ENCODE measurements at regions of chr9 and their contacts with region 1.

Region 1: DNA sequence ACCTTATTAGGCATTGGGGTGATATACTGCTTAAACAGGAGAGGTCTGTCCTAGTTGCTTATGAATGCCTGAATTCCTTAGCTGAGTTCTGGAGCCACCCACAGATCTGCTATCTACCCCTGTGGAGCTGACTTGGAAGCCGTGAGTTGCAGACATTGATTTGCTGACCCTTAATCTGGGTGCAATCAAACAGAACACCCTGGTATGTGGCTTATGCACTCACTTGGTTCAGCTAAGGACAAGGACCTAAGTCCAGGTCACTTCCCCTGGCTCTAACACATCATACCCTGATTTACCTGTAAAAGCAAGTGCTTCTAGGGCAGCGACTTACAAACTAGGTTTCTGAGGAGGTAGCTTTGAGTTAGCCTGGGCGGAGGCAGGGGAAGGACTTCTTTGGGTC is 41.6 kb upstream of the TLR4 start:
- DNase-seq: no peak
- ATAC-seq: no peak
- H3K4me3 ChIP-seq: no peak overlapping the region
- H3K27ac ChIP-seq: no peak overlapping the region
- H3K4me1 ChIP-seq: no peaks in the 10 kb centered on the region
- H3K27me3 ChIP-seq: no peaks in the 10 kb centered on the region
- CTCF ChIP-seq: no peak
- POLR2A ChIP-seq: no peak
- RAD21 ChIP-seq: no peak

Region 2: GRCh38 chr9:117616436-117616835 is 46.2 kb before region 1 on chr9:
- CTCF ChIA-PET with region 1: no interaction called
- POLR2A ChIA-PET with region 1: no interaction called
- dilution Hi-C with region 1: no loop called
- in situ Hi-C with region 1: loop called (anchors 10 kb)
- intact Hi-C with region 1: no loop called
- DNase-seq: no peak
- ATAC-seq: no peak
- H3K4me3 ChIP-seq: no peak overlapping the region
- H3K27ac ChIP-seq: no peak overlapping the region
- H3K4me1 ChIP-seq: no peaks in the 10 kb centered on the region
- H3K27me3 ChIP-seq: no peaks in the 10 kb centered on the region
- CTCF ChIP-seq: no peak
- POLR2A ChIP-seq: no peak
- RAD21 ChIP-seq: no peak

Region 3: GRCh38 chr9:117858561-117858960 is 195.9 kb after region 1 on chr9:
- CTCF ChIA-PET with region 1: no interaction called
- POLR2A ChIA-PET with region 1: no interaction called
- dilution Hi-C with region 1: no loop called
- in situ Hi-C with region 1: no loop called
- intact Hi-C with region 1: no loop called
- DNase-seq: no peak
- ATAC-seq: no peak
- H3K4me3 ChIP-seq: no peak overlapping the region
- H3K27ac ChIP-seq: no peak overlapping the region
- H3K4me1 ChIP-seq: no peaks in the 10 kb centered on the region
- H3K27me3 ChIP-seq: no peaks in the 10 kb centered on the region
- CTCF ChIP-seq: no peak
- POLR2A ChIP-seq: no peak
- RAD21 ChIP-seq: no peak